A549 (cell line): ENCODE measurements at regions of chr17 and their contacts with region 1.

Region 1: GRCh38 chr17:80195731-80196529 is 24.2 kb downstream of the SGSH start:
- DNase-seq: no peak
- ATAC-seq: peak in 1 of 2 experiments; percentile 14; a peak in 1 of 6 replicates
- H3K4me3 ChIP-seq: no peak overlapping the region
- H3K27ac ChIP-seq: no peak overlapping the region
- H3K4me1 ChIP-seq: no peaks in the 10 kb centered on the region
- CTCF ChIP-seq: peak; percentile 83
- EP300 ChIP-seq: no peak
- POLR2A ChIP-seq: no peak
- RAD21 ChIP-seq: peak; percentile 81 to 88

Region 2: GRCh38 chr17:80147035-80147836 is 48.7 kb before region 1 on chr17 and contains the start of gene EIF4A3:
- CTCF ChIA-PET with region 1: interaction called, 12 read pairs
- POLR2A ChIA-PET with region 1: no interaction called
- DNase-seq: peak; percentile 100
- ATAC-seq: peak; percentile 92 to 93
- H3K4me3 ChIP-seq: peak within 1 kb of the TSS; percentile 65
- H3K27ac ChIP-seq: peak within 1 kb of the TSS; percentile 92 to 95
- H3K4me1 ChIP-seq: peaks cover 26% of the 10 kb centered on the region
- CTCF ChIP-seq: no peak
- EP300 ChIP-seq: no peak
- POLR2A ChIP-seq: peak; percentile 97
- RAD21 ChIP-seq: no peak
- polyA plus RNA-seq, gene EIF4A3: 181 and 201 TPM in 2 replicates

Region 3: DNA sequence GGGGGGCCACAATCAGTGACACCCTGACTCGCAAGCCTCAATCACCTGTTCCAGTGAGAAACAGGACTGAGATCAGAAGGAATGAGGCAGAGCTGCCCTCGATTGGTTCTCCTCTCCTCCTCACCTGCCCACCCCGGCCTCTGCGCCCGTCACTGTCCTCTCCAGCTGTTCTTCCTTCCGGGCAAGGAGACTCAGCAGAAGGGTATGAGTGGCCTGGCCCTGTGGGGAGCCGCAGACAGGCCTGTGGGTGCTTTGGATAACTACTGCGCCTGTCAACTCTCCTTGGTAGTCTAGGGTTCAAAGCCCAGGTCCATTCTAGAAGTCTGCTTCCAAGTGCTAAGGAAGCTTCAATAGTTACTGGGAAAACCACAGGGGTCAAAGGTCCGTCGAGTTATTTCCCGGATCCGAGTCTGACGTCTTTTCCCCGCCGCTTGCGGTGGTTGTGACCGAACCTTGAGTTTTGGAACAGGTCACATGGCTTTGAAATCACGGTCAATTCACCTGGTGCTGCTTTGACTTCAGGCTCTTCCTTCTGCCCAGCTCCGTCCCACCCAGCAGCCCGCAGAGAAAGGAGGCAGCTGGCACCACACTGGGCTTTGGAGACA is 17.8 kb before region 1 on chr17:
- CTCF ChIA-PET with region 1: interaction called, 60 read pairs
- POLR2A ChIA-PET with region 1: no interaction called
- DNase-seq: no peak
- ATAC-seq: no peak
- H3K4me3 ChIP-seq: no peak overlapping the region
- H3K27ac ChIP-seq: no peak overlapping the region
- H3K4me1 ChIP-seq: peaks cover 11% of the 10 kb centered on the region
- CTCF ChIP-seq: no peak
- EP300 ChIP-seq: no peak
- POLR2A ChIP-seq: no peak
- RAD21 ChIP-seq: no peak

Region 4: GRCh38 chr17:80212109-80212508 is 16.2 kb after region 1 on chr17:
- CTCF ChIA-PET with region 1: interaction called, 34 read pairs
- POLR2A ChIA-PET with region 1: no interaction called
- DNase-seq: no peak
- ATAC-seq: no peak
- H3K4me3 ChIP-seq: no peak overlapping the region
- H3K27ac ChIP-seq: no peak overlapping the region
- H3K4me1 ChIP-seq: no peaks in the 10 kb centered on the region
- CTCF ChIP-seq: no peak
- EP300 ChIP-seq: no peak
- POLR2A ChIP-seq: 0 out of 2 replicates have a peak, but pooled peaks have one; percentile 19
- RAD21 ChIP-seq: no peak